WTC11 (cell line): ENCODE measurements at regions of chr13 and their contacts with region 1.

Region 1: GRCh38 chr13:70098669-70099068 is 9.0 kb upstream of the ATXN8OS start:
- DNase-seq: no peak
- ATAC-seq: no peak
- H3K4me3 Mint-ChIP-seq: no peak overlapping the region
- H3K27ac Mint-ChIP-seq: no peak overlapping the region
- H3K4me1 Mint-ChIP-seq: no peaks in the 10 kb centered on the region
- H3K27me3 Mint-ChIP-seq: no peaks in the 10 kb centered on the region
- CTCF ChIP-seq: no peak

Region 2: DNA sequence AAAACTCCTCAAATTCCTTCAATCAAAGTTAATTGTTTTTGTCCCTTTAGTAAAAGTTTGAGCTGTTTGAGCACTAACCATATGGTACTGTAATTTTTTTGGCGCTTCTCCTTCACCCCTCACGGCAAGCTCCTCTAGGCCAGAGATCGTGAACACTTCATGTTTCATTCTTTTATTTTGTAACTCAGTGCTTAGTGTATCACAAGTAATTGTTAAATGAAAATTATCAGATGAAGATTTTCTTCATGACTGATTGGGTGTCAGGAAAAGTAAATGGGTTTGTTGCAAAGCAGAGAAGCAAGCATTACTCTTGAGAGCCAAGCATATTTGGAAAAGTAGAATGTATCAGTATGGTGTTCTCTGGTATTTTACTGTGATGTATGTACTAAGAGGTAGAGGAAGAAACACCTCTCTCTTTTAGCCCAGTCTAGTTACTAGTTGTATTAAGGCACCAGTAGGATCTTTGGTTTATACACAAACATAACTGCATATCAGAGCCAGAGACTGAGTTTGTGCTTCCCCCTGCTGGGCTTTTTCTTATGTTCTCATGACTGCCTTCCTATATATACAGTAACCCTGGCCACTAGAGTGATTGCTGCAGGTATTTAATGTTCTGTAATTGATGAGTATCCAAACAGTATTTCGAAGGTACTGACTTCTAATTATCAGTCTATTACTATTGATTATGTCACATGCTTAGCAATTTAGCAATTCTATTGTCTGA is 211.9 kb after region 1 on chr13:
- CTCF ChIA-PET with region 1: interaction called, 10 read pairs
- POLR2A ChIA-PET with region 1: no interaction called
- DNase-seq: peak; percentile 29
- ATAC-seq: peak; percentile 88
- H3K4me3 Mint-ChIP-seq: no peak overlapping the region
- H3K27ac Mint-ChIP-seq: no peak overlapping the region
- H3K4me1 Mint-ChIP-seq: no peaks in the 10 kb centered on the region
- H3K27me3 Mint-ChIP-seq: no peaks in the 10 kb centered on the region
- CTCF ChIP-seq: no peak; the same call in 1 of the 2 replicates